Activated T-helper 2 cell treated with anti-CD3 and anti-CD28 coated beads, Interferon-gamma antibody, Interleukin-2, Interleukin-4, amounts not matched to agents 10 μg/mL and 5 μg/mL and 100 μg/mL, durations not matched to agents 14 hours and 24 hours and 36 hours (primary cell): ENCODE measurements at regions of chr17 and their contacts with region 1.

Region 1: GRCh38 chr17:42378597-42379594 is 9.3 kb downstream of the STAT3 start:
- DNase-seq: no peak
- H3K4me3 Mint-ChIP-seq: peak overlapping the region; percentile 71
- H3K27ac Mint-ChIP-seq: peak overlapping the region; percentile 79
- H3K4me1 Mint-ChIP-seq: peaks cover 44% of the 10 kb centered on the region
- H3K27me3 Mint-ChIP-seq: no peaks in the 10 kb centered on the region

Region 2: DNA sequence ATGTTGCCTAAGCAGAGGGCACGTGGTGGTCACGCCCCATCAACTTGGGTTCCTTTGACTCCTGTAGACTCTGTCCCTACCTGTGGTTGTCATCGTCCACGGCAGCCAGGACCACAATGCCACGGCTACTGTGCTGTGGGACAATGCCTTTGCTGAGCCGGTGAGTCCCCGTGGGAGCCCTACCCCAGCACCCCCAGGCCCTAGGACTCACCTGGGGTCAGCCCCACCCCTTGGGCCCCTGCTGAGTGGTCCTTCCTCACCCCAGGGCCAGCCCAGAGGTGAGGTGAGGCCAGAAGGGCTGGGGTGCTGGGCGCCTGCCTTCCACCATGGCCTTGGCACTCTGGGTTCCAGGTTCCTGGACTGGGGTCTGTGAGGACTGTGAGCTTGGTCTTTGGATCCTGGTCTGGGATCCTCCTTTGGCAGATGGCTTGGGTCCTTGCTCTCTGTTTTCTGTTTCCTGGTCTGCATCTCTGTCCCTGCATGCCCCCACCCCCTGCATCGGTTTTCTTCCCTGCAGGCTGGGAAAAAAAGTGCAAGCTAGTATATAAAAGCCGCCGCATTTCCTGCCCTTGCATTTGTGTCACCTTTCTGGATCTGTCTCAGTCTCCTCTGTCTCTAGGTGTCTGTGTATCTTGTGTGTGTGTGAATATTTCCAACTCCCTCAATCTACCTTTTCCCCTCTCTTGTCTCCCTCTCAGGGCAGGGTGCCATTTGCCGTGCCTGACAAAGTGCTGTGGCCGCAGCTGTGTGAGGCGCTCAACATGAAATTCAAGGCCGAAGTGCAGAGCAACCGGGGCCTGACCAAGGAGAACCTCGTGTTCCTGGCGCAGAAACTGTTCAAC is 73.1 kb before region 1 on chr17:
- intact Hi-C with region 1: no loop called
- DNase-seq: no peak
- H3K4me3 Mint-ChIP-seq: no peak overlapping the region
- H3K27ac Mint-ChIP-seq: peak overlapping the region; percentile 30
- H3K4me1 Mint-ChIP-seq: peaks cover 33% of the 10 kb centered on the region
- H3K27me3 Mint-ChIP-seq: no peaks in the 10 kb centered on the region

Region 3: GRCh38 chr17:42365136-42365535 is 13.8 kb before region 1 on chr17:
- intact Hi-C with region 1: loop called (anchors 2 kb)
- DNase-seq: no peak
- H3K4me3 Mint-ChIP-seq: peak overlapping the region; percentile 35
- H3K27ac Mint-ChIP-seq: peak overlapping the region; percentile 81
- H3K4me1 Mint-ChIP-seq: peaks cover 67% of the 10 kb centered on the region
- H3K27me3 Mint-ChIP-seq: no peaks in the 10 kb centered on the region